Aorta (tissue), 5 donors: ENCODE measurements at regions of chr3 and their contacts with region 1.

Region 1: DNA sequence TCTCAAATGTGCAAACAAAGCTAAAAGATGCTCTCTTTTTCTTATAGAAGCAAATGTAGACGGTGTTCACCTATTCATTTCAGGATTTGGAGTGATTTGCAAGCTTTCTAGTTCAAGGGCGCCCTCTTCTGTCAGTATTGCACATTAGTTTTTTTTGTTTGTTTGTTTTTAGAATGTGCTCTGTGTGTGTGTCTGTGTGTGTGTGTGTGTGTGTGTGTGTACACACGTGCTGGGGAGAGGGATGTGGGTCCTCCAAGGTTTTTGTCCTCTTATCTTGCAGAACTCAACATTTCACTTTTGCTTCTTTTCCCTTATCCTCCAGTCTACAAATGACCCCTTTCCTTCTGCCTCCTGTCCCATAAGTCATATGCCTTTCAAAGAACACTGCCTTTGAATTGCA is 23.5 kb downstream of the DNAH1 start:
- DNase-seq: no peak
- ATAC-seq: no peak
- H3K4me3 ChIP-seq: no peak overlapping the region
- H3K27ac ChIP-seq: no peak overlapping the region
- H3K4me1 ChIP-seq: no peaks in the 10 kb centered on the region
- H3K27me3 ChIP-seq: no peaks in the 10 kb centered on the region

Region 2: DNA sequence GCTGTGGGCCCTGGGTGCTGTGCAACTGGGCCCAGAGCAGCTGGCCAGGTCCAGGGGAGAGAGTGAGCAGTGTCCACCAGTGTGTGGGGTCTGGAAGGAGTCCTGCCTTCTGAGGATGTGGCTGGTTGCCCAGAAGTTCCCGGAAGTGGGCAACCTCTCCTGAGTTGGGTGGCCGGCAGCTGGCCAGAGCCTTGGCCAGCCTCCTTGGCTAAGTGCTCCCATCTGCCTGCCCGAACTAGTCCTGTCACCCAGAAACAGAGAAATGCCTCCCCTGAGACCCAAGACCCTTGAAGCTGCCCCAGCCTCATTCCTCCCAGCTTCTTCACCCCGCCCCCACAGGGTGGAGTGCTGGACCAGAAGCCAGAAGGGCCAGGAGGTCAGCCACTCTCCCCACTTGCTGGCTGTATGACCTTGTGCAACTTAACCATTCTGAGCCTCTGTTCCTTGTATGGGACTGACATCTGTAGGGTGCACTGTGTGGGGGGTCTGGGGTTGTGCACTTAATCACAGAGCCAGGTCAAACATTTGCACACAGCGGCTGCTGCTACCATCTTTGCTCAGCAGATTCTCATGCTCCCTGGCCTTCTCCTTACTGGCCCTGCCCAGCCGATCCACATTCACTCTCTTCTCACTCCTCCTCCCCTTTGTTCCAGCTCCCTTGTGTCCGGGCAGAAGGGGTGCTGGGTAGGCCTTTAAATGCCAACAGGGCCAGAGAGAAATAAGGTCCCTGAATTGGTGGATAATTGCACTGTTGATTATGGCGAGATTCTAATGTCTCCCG is 149.1 kb before region 1 on chr3:
- intact Hi-C with region 1: no loop called
- DNase-seq: peak; percentile 76 to 88
- ATAC-seq: peak; percentile 75
- H3K4me3 ChIP-seq: no peak overlapping the region
- H3K27ac ChIP-seq: peak overlapping the region in 1 of 2 donors; percentile 32
- H3K4me1 ChIP-seq: peaks cover 0 to 2% of the 10 kb centered on the region in 2 donors
- H3K27me3 ChIP-seq: no peaks in the 10 kb centered on the region

Region 3: GRCh38 chr3:52231502-52232293 is 107.9 kb before region 1 on chr3:
- intact Hi-C with region 1: loop called (anchors 2 to 5 kb)
- DNase-seq: peak; percentile 88 to 94
- ATAC-seq: peak; percentile 61
- H3K4me3 ChIP-seq: no peak overlapping the region
- H3K27ac ChIP-seq: no peak overlapping the region
- H3K4me1 ChIP-seq: no peaks in the 10 kb centered on the region
- H3K27me3 ChIP-seq: no peaks in the 10 kb centered on the region

Region 4: DNA sequence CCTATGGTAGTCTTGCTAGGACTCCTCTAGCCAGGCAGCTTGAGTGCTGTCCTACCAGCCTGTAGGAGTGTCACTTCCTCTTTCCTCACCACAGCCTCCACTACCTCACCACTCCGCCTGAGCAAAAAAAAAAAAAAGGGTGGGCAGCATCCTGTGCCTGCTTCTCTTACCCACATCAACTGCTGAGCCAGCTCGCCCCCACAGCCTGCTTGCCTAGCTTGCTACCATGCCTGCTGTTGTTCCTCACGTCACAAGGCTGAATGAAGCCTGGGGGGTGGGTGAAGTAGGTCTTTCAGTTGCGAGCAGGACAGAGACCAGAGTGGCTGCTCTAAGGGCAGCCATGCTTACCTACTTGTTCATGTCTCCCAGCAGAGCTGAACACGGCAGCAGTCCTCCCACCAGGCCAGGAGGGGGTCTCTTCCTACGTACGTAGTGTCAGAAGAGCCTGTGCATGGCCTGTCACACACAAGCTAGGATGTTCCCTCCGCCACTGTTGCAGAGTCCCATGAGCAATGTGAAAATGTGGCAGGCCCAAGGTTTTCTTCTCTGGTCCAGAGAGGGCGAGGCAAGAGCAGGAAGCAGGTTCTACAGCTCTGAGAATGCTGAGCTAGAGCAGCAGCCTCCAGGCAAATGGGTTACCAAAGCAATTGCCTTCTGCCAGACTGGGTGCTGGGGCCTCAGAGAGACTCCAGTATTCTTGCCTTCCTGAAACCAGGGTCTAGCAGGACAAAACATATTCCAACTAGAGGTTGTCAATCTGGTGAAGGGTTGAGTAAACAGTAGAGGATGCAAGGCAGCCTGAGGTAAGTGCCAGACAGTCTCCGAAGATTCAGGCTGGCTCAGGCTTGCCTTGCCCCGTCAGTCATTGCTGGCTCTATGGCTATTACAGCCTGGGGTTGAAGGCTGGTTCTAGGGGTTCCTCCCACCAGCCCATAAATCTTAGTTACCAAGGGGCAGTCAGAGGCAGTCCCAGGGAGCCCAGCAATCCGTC is 86.0 kb before region 1 on chr3:
- intact Hi-C with region 1: no loop called
- DNase-seq: peak; percentile 78 to 84
- ATAC-seq: peak; percentile 66
- H3K4me3 ChIP-seq: no peak overlapping the region
- H3K27ac ChIP-seq: no peak overlapping the region
- H3K4me1 ChIP-seq: no peaks in the 10 kb centered on the region
- H3K27me3 ChIP-seq: no peaks in the 10 kb centered on the region